Naive thymus-derived CD8-positive, alpha-beta T cell (primary cell): ENCODE measurements at regions of chr19 and their contacts with region 1.

Region 1: DNA sequence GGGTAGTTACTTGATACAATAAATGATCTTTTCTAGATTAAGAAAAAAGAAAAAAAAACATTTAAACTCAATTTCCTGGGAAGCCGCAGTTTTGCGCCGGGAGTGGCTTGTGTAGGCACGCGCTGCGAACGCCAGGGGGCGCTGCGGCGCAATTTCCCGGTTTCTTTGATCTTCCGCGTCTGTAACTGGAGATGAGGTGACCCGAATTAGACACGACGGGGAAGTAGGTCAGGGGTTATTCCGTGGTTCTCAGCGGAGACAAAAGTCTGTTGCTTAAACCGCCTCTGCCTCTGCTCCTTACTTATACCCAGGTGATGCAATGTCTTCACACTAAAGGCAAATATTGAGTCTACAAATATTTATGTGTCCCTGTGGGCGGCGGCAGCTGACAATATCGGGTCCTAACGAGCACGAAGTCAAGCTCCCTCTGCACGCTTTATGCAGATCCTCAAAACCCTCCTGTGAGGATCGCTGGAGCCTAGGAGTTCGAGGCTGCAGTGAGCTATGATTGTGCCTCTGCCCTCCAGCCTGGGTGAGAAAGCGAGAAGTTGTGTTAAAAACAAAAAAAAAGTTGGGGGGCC is 15.2 kb downstream of the STXBP2 start:
- DNase-seq: peak; percentile 77 to 91 (median 87)
- ATAC-seq: peak; percentile 93 to 94
- H3K4me3 Mint-ChIP-seq: peak overlapping the region; percentile 70 to 84 (median 79)
- H3K27ac Mint-ChIP-seq: peak overlapping the region; percentile 20 to 86 (median 77)
- H3K4me1 Mint-ChIP-seq: peaks cover 7 to 21% (median 14%) of the 10 kb centered on the region in 4 donors
- H3K27me3 Mint-ChIP-seq: peaks cover 0 to 2% (median 0%) of the 10 kb centered on the region in 5 donors

Region 2: GRCh38 chr19:7636691-7637373 is 15.3 kb before region 1 on chr19 and contains the start of gene STXBP2:
- POLR2A ChIA-PET with region 1: interaction called, 16 read pairs
- DNase-seq: peak; percentile 87 to 98 (median 94)
- ATAC-seq: peak; percentile 95 to 96
- H3K4me3 Mint-ChIP-seq: peak within 1 kb of the TSS; percentile 73 to 91 (median 86)
- H3K27ac Mint-ChIP-seq: peak within 1 kb of the TSS; percentile 77 to 94 (median 92)
- H3K4me1 Mint-ChIP-seq: peaks cover 20 to 56% (median 44%) of the 10 kb centered on the region in 4 donors
- H3K27me3 Mint-ChIP-seq: no peaks in the 10 kb centered on the region
- polyA plus RNA-seq, gene STXBP2: 50.4 to 63.2 (median 54.9) TPM

Region 3: DNA sequence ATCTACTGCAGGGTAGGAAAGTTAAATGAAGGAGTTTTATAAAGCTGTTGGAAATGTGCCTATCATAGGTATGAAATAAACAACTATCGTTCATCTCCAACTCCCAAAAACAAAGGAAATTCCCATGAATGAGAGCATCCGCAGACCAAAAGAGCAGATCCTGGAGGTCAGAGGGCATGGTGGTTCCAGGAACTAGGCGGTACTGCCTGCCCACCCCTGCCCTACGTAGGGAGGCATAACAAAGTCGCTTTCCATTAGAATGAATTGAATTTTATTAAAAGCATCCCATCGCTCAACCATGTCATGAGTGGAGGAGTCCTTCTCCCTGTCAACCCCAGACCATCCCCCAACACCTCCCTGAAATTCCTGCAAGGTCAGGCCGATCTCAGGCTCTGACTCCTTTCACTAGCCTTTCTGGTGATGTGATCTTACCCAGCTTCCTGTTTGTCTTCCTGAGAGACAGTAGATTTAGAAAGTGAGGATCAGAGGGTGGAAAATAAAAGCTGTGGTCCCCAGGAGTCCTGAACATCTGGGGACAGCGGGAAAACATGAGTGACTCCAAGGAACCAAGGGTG is 110.7 kb after region 1 on chr19 and contains the start of gene CLEC4M:
- POLR2A ChIA-PET with region 1: no interaction called
- DNase-seq: no peak
- ATAC-seq: no peak
- H3K4me3 Mint-ChIP-seq: no peak within 1 kb of the TSS
- H3K27ac Mint-ChIP-seq: peak within 1 kb of the TSS in 2 of 10 donors; percentile 48 to 56
- H3K4me1 Mint-ChIP-seq: peaks cover 4 to 13% (median 8%) of the 10 kb centered on the region in 4 donors
- H3K27me3 Mint-ChIP-seq: peaks cover 0 to 5% (median 0%) of the 10 kb centered on the region in 5 donors
- polyA plus RNA-seq, gene CLEC4M: not detected